Transverse colon (tissue), 4 donors: ENCODE measurements at regions of chr1 and their contacts with region 1.

Region 1: DNA sequence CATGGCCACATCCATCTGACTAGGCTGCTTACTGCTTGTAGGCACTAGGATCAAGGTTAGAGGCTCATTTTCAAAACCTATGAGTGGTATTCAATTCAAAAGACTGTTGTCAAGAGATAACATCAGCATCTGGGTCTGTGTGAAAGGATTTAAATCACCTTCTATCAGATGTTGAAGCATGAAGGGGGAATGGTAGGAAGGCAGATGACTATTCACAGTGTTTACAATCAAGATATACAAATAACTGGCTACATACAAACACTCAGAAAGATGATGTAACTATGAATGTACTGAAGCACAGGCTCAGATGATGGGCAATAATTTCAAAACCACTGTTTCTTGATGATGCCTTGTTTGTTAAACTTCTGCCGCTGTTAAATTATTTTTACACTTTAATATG is 249.2 kb downstream of the SLC45A1 start:
- DNase-seq: no peak
- H3K4me3 ChIP-seq: no peak overlapping the region
- H3K27ac ChIP-seq: no peak overlapping the region
- H3K4me1 ChIP-seq: peaks cover 0 to 25% (median 1%) of the 10 kb centered on the region in 4 donors
- H3K27me3 ChIP-seq: no peaks in the 10 kb centered on the region
- CTCF ChIP-seq: no peak
- EP300 ChIP-seq: no peak
- POLR2A ChIP-seq: no peak

Region 2: DNA sequence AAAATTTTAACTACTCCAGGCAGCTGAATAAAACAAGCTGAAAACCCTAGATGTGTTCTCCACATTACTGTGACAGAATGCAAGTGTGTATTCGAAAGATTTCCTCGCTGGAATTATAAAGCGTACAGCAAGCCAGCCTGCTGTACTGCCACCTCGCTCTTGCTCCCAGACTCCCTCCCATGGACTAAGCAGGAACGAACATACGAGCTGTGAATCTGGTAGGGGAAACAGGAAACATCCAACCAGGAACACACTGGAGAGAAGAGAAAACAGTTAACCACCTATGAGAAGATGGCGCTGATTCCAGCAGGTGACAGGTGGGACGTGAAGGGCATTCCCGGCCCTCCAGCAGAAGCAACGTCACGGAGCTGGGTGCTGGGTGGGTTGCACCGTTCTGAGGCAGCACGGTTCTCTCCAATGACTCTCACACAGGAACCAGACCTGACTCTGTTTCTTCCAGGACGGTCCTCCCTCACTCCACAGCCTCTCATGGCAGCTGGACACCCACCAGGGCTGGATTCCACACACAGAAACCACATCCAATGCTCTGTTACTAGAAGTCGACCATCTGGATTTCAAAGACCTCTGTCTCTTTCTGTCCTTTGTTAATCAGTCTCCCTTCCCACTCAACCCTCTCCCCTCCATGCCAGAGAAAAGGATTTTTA is 31.0 kb after region 1 on chr1:
- in situ Hi-C with region 1: no loop called
- intact Hi-C with region 1: loop called (anchors 1 kb)
- DNase-seq: peak; percentile 26
- H3K4me3 ChIP-seq: no peak overlapping the region
- H3K27ac ChIP-seq: peak overlapping the region; percentile 39 to 77 (median 59)
- H3K4me1 ChIP-seq: peaks cover 4 to 26% (median 16%) of the 10 kb centered on the region in 4 donors
- H3K27me3 ChIP-seq: no peaks in the 10 kb centered on the region
- CTCF ChIP-seq: peak; percentile 29 to 54 (median 32)
- EP300 ChIP-seq: no peak
- POLR2A ChIP-seq: no peak

Region 3: DNA sequence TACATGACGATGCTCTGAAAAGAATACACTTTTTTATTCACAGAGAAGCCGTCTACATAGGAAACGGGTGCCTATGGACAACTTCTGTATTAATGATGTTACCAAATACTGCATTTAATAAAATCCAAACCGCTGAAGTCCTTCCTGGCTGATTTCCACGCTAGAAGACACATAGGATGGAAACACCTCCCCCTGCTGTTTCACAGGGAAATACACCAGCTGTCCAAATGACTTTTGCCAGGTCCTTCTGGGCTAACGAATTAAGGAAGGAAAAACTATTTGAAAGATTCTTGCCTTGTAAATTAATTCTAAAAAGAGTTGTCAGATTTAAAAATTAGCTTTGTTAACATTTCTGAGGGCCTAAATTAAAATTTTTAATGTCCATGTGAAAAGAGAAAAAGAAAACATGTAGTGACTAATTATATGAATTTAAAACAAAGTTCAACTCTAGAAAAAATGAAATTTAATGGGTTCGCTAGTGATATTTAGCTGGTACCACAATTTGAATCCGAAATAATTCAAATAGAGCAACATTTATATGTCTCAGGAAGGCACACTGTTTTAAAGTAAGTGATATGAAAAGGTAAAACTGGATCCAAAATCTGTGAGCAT is 104.3 kb after region 1 on chr1:
- in situ Hi-C with region 1: loop called in 3 of 4 experiments (anchors 5 to 25 kb)
- intact Hi-C with region 1: loop called (anchors 10 kb)
- DNase-seq: no peak
- H3K4me3 ChIP-seq: no peak overlapping the region
- H3K27ac ChIP-seq: no peak overlapping the region
- H3K4me1 ChIP-seq: peaks cover 21 to 81% (median 41%) of the 10 kb centered on the region in 4 donors
- H3K27me3 ChIP-seq: no peaks in the 10 kb centered on the region
- CTCF ChIP-seq: peak; percentile 71 to 81 (median 75)
- EP300 ChIP-seq: no peak
- POLR2A ChIP-seq: no peak